Sciatic nerve (tissue), 2 donors: ENCODE measurements at regions of chr16 and their contacts with region 1.

Region 1: DNA sequence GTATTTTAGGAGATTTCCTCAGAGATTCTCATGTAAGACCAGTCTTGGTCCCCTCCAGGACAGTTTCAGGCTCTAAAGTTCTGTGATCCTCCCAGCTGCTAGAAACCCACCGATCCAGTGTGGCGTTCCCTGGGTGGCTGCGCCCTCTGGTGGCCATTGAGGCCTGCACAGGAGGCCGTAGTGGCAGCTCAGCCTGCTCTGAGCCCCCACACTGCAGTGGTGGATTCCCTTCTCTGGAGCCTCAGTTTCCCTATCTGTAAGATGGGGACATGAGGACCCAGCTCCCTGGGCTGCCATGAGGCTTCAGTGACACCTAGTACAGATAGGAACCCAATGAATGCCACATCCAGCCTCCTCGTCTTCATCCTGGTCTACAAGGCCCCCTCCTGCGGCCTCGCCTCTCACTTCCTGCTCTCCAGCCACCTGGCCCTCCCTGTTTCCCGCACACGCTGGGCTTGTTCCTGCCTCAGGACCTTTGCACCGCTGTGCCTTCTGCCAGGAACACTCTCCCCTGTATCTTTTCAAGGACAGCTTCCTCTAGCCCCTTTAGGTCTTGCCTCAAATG is 16.5 kb downstream of the CCDC102A start:
- DNase-seq: peak; percentile 89
- ATAC-seq: peak; percentile 87

Region 2: DNA sequence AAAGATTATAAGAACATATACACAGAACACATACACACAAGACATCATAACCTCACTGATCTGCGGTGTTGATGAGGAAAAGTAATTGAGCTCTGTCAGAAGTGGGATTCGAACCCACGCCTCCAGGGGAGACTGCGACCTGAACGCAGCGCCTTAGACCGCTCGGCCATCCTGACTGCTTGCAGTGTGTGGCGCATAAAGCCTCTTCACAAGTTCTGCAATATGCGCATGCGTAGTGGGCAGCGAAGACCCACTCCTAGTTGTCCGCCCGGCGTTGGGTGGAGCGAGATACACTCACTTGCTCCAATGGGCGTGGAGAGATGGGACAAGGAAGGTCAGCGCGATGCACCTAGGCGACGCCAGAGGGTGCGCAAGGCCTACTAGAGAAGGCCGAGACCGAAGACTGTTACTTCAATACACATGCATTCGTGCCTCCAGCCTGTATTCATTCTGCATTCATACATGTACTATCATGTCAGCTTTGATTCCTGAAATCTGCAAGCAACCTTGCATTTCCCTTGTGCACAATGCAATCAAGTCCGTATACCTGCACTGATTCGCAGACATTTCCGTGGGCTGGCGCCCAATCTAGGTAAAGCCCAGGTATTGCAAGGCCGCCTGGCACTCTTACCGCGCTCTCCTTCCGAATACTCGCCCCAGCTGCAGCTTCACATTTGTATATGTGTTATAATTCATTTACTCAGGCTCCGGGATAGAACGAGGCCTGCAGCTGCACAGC is 219.3 kb before region 1 on chr16:
- intact Hi-C with region 1: loop called (anchors 5 kb)
- DNase-seq: peak; percentile 99
- ATAC-seq: peak; percentile 95

Region 3: DNA sequence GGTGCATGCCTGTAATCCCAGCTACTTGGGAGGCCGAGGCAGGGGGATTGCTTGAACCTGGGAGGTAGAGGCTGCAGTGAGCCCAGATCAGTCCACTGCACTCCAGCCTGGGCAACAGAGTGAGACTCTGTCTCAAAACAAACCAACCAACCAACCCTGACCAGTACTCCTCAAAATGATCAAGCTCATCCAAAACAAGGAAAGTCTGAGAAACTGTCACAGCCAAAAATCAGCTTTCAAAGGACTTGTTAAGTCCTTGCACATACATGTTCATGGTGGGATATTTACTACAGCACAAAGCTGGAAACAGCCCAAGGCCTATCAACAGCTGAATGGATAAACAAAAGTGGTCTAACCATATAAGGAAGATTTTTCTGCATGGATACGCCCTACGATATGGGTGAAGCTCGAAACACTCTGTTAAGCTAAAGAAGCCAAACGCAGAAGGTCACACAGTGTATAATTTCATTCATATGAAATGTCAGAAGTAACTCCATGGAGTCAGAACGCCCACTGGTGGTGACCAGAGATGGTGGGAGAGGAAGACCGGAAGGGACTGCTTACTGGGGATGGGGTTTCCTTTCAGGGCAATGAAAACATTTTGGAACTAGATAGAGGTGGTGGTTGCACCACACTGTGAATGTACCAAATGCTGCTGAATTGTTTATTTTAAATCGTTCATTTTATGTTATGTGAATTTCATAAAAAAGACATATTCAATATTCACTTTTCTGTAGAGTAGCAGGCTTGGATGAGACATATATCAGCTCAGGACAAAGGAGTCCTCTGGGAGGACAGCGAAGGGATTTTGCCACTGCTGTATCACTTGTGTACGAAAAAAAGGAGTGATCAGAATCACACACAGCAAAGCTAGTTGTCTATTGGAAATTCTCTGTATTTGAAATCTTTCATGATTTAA is 97.6 kb before region 1 on chr16:
- intact Hi-C with region 1: loop called (anchors 2 kb)
- DNase-seq: peak; percentile 75
- ATAC-seq: peak; percentile 70

Region 4: DNA sequence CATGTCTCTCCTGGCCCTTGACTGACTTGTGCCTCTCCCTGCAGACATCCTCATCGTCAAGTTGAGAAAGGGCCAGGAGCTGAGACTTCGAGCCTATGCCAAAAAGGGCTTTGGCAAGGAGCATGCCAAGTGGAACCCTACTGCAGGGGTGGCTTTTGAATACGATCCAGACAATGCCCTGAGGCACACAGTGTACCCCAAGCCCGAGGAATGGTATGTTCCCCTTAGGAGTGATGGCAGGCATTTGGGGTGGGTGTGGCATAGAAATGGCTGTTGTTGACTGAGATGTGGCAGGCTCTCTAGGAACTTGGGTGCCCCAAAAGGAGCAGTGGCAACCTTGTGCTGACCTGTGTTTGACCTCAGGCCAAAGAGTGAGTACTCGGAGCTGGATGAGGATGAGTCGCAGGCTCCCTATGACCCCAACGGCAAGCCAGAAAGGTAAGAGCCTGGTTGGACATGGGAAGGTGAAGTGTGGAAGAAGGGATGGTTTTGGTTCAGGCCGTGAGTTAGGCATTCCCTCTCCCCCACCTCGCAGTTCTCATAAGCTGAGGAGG is 49.9 kb before region 1 on chr16:
- intact Hi-C with region 1: loop called (anchors 5 kb)
- DNase-seq: no peak
- ATAC-seq: no peak

Region 5: DNA sequence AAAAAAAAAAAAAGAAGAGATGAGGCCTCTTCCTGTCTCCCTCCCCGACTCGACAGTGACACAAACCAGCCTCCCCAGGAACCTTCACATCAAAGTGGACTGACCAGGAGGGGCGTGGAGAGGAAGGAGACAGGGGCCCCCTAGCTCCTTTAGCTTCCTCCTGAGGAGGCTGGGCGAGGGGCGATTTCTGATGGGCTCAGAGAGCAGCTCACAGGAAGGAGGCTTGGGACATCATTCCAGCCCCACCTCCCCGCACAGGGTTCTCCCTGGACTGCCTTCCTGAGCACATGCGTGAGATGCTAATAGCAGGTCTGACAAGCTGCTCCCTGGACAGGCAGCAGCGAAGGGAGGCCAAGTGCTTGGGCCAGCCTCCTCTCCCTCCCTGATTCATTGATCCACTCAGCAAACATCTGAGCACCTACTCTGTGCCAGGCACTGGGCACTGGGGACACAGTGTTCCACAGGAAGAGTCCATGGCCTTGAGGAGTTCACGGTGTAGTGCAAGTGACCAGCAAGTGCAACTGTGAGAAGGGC is 19.2 kb before region 1 on chr16:
- intact Hi-C with region 1: no loop called
- DNase-seq: no peak
- ATAC-seq: no peak

Region 6: GRCh38 chr16:57578521-57579360 is 58.9 kb after region 1 on chr16:
- intact Hi-C with region 1: loop called (anchors 1 kb)
- DNase-seq: no peak
- ATAC-seq: no peak